Vagina (tissue), 2 donors: ENCODE measurements at regions of chr17 and their contacts with region 1.

Region 1: DNA sequence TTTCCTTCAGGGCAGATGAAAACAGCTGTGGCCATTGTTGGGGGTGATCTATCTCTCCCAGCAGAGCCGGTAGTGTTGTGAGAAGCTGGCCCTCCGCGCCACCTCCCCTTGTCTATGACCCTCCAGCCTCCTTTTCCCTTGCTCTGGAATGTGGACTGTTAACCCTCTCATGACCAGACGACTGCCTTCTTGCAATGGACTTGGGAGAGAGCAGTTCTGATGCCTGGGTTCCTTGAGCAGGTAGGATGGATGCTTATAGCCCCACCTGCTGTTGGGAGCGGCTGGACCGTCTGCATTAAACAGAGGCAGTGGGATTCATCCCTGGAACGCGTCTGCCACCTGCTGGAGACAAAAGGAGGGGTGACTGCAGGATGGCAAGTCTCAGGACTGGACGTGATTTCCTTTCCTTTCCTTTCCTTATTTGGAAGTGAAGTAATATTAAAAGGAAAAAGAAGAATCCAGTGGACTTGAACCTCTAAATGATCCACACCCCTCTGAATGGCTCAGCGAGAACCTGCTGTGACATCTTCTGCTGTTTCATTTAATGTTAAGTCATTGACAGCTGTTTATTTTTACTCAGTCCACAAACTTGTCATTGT is 1.8 kb upstream of the SOST start:
- DNase-seq: no peak
- H3K4me3 ChIP-seq: no peak overlapping the region
- H3K27ac ChIP-seq: no peak overlapping the region
- H3K4me1 ChIP-seq: peaks cover 3% of the 10 kb centered on the region
- H3K27me3 ChIP-seq: no peaks in the 10 kb centered on the region
- CTCF ChIP-seq: peak; percentile 97 to 99 (median 99)
- POLR2A ChIP-seq: no peak

Region 2: GRCh38 chr17:43694077-43694870 is 66.1 kb before region 1 on chr17:
- intact Hi-C with region 1: loop called (anchors 2 kb)
- DNase-seq: no peak
- H3K4me3 ChIP-seq: no peak overlapping the region
- H3K27ac ChIP-seq: no peak overlapping the region
- H3K4me1 ChIP-seq: peaks cover 10% of the 10 kb centered on the region
- H3K27me3 ChIP-seq: no peaks in the 10 kb centered on the region
- CTCF ChIP-seq: peak; percentile 75 to 94 (median 91)
- POLR2A ChIP-seq: no peak